ENCODE measurements at regions of chrX and their contacts with region 1.

Region 1: DNA sequence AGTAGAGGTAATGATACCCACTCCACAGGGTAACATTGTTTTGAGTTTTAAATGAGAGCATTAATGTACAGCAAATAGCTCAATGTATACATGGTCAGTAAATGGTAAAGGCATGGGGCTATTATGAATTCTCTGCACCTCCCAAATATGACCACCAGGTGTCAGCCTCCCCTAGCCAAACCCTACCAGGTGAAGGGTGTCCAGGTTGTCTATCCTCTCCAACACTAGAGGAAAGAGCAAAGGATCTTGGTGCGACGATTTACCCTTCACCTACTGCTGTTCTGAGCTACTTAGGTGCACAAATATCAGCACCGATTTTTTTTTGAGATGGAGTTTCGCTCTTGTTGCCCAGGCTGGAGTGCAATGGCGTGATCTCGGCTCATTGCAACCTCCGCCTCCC is 26.5 kb upstream of the XIAP start:
- DNase-seq: no peak

Region 2: GRCh38 chrX:123871309-123871708 is 37.9 kb after region 1 on chrX:
- intact Hi-C with region 1: no loop called
- DNase-seq: no peak

Region 3: GRCh38 chrX:123884809-123885408 is 51.5 kb after region 1 on chrX:
- intact Hi-C with region 1: loop called in 1 of 2 experiments (anchors 5 kb)
- DNase-seq: no peak

Region 4: DNA sequence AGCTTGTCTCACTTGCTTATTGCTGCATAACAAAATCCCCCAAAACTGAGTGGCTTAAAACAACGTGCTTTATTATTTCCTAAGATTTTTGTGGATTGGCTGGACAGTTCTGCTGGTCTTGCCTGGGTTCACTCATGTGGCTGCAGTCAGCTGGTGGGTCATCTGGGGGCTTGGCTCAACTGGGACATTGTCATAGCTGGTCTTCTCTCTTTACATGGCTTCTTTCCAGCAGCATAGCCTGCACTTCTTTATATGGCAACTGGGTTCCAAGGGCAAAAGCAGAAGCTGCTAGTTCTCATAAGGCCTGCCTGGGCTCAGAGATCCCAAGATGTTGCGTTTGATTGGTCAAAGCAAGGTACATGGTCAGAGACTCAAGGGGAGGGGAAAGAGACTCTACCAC is 94.5 kb after region 1 on chrX:
- intact Hi-C with region 1: loop called in 1 of 2 experiments (anchors 10 kb)
- DNase-seq: no peak